Aorta (tissue), 5 donors: ENCODE measurements at regions of chr16 and their contacts with region 1.

Region 1: DNA sequence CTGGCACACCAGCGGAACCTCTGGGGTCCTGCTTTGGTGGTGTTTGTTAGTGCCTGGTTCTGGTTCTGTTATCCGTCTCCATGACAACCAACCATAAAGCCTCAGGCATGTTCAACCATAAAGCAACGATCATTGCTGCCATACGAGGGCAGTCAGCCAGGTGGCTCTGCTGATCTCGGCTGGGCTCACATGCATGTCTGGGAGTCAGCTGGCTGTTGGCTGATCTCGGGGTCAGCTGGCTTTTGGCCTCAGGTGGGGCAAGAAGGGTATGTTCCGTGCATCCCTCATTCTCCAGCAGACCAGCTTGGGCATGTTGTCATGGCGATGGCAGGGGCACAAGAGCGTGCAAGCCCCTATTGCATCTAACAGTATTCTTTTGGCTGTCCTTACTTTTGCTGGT is 86.2 kb downstream of the ABCC6 start:
- DNase-seq: peak in 1 of 2 donors; percentile 35
- ATAC-seq: no peak
- H3K4me3 ChIP-seq: no peak overlapping the region
- H3K27ac ChIP-seq: no peak overlapping the region
- H3K4me1 ChIP-seq: no peaks in the 10 kb centered on the region
- H3K27me3 ChIP-seq: no peaks in the 10 kb centered on the region

Region 2: GRCh38 chr16:15749366-15749765 is 387.7 kb before region 1 on chr16:
- intact Hi-C with region 1: loop called in 1 of 2 experiments (anchors 10 kb)
- DNase-seq: no peak
- ATAC-seq: no peak
- H3K4me3 ChIP-seq: no peak overlapping the region
- H3K27ac ChIP-seq: peak overlapping the region in 1 of 2 donors; percentile 26
- H3K4me1 ChIP-seq: no peaks in the 10 kb centered on the region
- H3K27me3 ChIP-seq: no peaks in the 10 kb centered on the region

Region 3: GRCh38 chr16:16042076-16042475 is 95.0 kb before region 1 on chr16:
- intact Hi-C with region 1: loop called in 1 of 2 experiments (anchors 10 kb)
- DNase-seq: no peak
- ATAC-seq: no peak
- H3K4me3 ChIP-seq: no peak overlapping the region
- H3K27ac ChIP-seq: no peak overlapping the region
- H3K4me1 ChIP-seq: peaks cover 0 to 3% of the 10 kb centered on the region in 2 donors
- H3K27me3 ChIP-seq: no peaks in the 10 kb centered on the region